ENCODE measurements at regions of chr17 and their contacts with region 1.

Region 1: GRCh38 chr17:28446728-28447395 is 26.6 kb upstream of the SLC13A2 start:
- DNase-seq: no peak

Region 2: GRCh38 chr17:28484296-28484695 is 37.4 kb after region 1 on chr17:
- intact Hi-C with region 1: no loop called
- DNase-seq: no peak

Region 3: DNA sequence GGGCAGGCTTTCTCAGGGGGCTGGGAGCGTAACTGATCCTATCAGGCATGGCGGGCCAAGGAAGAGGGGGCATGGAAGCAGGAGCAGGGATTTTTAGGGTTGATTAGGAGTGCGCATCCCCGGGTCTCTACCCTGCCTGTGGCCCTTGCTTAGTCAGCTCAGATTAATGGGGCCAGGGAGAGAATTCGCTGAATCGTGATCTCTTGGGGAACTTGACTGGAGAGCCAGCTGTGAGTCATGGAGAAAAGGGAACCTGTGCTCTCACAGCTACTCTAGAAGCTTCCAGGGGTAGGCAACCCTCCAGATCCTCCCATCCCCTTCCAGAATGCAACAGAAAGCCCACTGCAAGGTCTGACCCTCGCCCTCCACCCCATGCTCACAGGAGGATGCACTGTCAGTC is 62.9 kb after region 1 on chr17:
- intact Hi-C with region 1: loop called in 1 of 2 experiments (anchors 10 kb)
- DNase-seq: no peak